ENCODE measurements at regions of chr2 and their contacts with region 1.

Region 1: DNA sequence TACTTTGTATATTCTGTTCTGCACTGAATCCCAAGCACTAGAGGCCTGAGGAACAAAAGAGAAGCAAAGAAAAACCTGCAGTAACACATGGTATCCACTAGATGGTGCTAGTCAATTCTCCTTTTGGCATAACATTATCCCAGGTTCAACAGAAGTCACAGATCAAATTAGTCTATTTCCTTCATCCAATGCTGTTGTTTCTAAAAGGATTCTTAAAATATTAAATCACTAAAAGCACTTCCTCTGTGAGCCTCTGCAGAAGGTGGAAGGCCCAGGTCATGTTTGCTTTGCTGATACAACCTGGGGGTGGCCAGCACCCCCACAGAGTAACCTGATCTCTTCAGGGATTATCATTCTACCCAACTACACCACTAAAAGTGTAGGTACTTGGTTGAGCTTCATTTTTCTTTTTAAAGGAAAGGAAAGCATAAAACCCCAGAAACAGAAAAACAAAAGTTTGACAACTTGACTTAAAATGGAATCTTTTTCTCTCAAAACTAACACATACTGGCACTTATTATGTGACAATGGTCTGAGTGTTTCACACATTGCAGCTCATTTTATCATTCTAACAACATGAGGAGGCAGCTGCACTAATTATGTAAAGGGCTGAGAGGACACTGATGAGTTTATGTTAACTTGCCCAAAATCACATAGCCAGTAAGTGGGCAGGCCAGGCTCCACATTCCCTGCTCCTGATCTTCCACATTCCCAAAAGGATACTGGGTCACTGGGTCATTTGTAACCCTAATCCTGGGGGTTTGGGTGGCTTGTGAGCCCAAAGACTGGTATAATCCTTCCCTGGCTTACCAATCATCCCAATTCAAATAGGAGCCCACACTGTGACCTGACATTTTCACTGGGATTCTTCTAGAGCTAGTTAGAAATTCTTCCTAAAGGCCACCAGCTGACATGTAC is 66.8 kb upstream of the DNER start:
- DNase-seq: no peak

Region 2: GRCh38 chr2:229673676-229674075 is 107.4 kb before region 1 on chr2:
- intact Hi-C with region 1: no loop called
- DNase-seq: no peak

Region 3: GRCh38 chr2:229753330-229753729 is 27.8 kb before region 1 on chr2:
- intact Hi-C with region 1: no loop called
- DNase-seq: no peak

Region 4: DNA sequence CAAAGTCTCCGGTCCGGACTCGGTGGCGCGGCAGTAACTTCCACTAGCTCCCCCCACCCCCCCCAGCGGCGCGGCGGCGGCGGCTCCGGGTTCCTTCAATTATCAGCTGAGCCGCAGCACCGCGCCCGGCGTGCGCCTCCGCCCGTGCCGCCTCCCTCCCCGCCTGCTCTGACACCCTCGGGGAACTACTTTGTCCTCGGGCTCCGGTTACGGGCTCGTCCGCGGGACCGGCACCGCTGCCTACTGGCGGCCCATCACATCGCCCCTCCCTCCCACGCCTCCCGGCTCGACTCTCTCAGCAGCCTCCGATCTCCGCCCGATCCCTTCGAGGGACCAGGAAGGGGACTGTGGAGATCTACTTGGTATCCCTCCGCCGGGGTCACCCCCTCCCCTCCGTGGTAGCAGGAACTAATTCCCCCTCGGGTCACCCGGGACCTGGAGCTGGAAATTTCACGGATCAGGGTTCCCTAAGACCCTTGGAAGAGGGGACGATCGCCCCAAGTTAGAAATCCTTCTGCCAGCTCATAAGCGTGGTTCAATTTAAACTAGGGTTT is 140.9 kb after region 1 on chr2 and contains the start of gene TRIP12:
- intact Hi-C with region 1: loop called (anchors 5 kb)
- DNase-seq: peak in 9 of 10 donors; percentile 82 to 97 (median 88)

Measured in posterior cingulate gyrus (tissue), 11 donors.